Head of caudate nucleus (tissue), 42 donors: ENCODE measurements at regions of chr3 and their contacts with region 1.

Region 1: DNA sequence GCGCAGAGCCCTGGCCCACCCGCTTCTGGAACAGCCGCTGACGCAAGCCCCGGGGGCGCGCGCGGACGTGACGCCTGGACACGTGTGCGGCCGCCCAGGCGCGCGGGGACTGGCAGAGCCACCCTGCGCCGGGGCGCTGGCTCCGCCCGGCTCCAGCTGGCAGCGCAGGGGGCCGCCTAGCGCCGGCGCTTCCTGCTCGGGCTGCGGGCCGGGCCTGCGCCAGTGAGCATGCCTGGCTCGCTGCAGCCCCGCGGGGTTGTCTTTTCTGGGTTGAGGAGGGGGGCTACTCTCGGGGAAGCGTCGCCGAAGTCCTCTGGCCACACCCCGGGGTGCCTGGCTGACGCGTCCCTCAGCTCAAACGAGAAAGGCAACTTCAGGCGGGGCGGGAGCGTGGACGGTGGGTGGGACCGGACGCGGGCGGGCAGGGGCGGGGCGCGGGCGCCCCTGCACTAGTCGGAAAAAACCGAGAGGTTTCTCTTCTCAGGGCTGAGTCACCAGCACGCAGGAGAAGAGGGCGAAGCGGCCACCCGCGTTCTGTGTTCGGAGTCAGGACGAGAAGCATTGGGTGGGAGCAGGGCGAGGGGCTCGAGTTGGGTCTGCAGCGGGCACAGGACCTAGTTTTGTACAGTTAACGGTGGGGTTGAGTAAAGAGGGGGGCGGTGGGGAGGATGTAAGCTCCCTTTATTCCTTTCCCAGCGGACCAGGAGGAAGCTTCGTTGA is at the start of gene SIAH2:
- DNase-seq: peak; percentile 78 to 97 (median 93)

Region 2: DNA sequence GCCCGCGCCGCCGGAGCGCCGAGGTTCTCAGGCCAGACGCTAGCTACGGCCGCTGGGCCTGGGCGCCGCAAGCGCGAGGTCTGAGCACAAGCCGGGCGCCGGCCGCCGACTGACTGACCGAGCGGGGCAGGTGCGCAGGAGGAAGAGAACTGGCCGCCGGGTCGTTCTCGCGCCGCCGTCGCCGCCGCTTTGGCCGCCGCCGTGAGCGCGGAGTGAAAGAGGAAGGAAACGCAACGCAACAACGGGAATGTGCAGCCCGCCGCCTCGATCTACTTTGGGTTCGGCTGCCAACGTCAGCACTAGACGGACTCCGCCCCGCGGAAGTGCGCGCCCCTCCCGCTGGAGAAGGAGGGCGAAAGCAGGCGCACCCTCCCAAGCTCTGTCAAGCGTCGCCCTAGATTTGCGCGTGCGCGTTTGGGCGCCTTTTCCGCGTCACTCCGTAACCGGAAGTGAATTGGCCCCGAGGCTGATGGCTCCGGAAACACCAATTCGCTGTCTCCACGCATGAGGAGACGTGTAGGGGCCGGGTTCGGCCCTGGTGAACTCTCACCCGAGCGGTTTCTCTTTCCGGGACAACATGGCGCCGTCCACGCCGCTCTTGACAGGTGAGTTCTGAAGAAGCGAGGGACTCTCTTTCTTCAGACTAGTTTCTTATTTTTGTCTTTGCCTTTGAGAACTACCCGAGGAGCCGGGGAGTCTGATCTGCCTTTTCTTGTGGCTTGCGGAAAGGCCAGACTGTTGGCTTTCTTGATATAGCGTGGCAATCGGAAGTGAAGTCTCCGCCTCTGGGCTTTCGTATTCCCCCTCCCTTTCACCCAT is 216.8 kb before region 1 on chr3 and contains the starts of genes EIF2A and SERP1:
- intact Hi-C with region 1: loop called (anchors 2 kb)
- DNase-seq: peak; percentile 97 to 100 (median 99)

Region 3: GRCh38 chr3:150603153-150603979 is 159.9 kb before region 1 on chr3 and contains the start of gene SELENOT:
- intact Hi-C with region 1: loop called (anchors 2 kb)
- DNase-seq: peak; percentile 85 to 95 (median 91)

Region 4: DNA sequence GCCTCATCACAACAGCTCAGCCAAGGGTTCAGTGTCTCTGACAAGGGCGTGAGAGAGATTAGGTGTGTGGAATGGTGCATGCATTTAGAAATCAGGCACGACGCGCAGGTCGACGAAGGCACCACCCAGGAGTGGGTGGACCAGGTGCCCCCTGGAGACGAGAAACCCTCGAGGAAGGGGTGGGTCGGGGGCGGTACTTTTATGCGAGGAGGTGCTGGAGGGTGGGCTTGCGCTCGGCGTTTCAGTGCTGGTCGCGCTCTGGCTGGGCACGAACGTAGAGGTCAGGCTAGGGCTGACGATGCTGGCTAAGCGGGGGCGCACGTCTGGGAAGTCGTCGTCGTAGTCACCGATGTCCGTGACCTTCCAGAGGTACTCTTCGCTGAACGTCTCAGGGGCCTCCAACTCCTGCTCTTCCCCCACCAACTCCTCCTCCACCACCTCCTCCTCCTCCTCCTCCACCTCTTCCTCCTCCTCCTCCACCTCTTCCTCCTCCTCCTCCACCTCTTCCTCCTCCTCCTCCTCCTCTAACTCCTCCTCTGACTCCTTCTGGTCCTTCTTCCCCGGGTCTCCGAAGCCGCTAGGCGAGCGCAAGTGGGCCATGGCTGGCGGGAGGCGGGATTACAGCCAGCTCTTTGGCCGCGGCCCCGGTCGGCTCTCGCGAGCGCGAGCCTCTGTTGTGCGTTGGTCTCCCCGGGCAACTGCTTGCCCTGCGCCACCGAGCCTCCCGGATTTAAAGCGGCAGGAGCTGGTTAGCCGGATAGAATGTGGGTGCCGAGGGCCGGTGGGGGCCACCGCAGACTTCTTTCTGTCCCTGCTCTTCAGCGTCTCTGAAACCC is 59.8 kb before region 1 on chr3 and contains the start of gene ERICH6:
- intact Hi-C with region 1: loop called (anchors 10 kb)
- DNase-seq: peak; percentile 70 to 93 (median 86)